Activated T-helper 1 cell treated with anti-CD3 and anti-CD28 coated beads, Interleukin-12 subunit alpha, Interleukin-12 subunit beta, Interleukin-2, Interleukin-4 antibody, amounts not matched to agents 30 ng/mL and 10 ng/mL and 1 ng/mL, durations not matched to agents 14 hours and 24 hours and 36 hours (primary cell): ENCODE measurements at regions of chr7 and their contacts with region 1.

Region 1: DNA sequence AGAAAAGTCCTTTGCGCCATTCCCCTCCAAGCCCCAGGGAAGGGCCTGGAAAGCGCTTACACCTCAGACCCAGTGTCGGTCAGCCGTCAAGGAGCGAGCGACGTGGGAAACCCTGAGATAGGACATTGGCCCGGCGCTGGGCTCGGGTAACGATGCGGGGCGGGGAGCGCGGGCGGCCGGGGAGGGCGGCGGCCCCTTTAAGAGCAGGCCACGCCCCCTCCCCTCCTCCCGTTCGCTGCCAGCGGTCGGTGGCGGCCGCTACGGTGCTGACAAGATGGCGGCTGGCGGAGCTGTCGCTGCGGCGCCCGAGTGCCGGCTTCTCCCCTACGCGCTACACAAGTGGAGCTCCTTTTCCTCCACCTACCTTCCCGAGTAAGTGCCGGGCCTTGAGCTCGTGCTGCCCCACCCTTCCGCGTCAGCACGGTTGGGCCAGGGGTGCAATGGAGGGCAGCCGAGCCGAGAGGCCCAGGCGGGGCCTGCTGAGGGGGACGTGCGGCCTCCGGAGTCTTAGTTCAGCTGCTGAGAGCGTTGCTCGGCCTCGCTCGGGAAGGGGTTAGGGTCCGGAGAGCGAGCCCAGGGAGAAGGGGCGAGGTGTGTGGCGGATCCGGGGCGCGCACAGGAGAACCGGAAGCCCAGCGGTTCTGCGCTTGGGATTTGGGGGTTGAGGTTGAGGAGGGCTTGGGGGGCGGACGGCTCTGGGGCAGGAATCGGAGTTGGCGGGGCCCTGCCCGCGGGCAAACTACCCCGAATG is at the start of gene MKLN1:
- DNase-seq: peak; percentile 87
- H3K4me3 Mint-ChIP-seq: peak within 1 kb of the TSS; percentile 96
- H3K27ac Mint-ChIP-seq: peak within 1 kb of the TSS; percentile 97
- H3K4me1 Mint-ChIP-seq: peaks cover 66% of the 10 kb centered on the region
- H3K27me3 Mint-ChIP-seq: no peaks in the 10 kb centered on the region
- total RNA-seq, gene MKLN1: 31.1 and 34.0 TPM in 2 replicates

Region 2: GRCh38 chr7:130961128-130961601 is 366.6 kb before region 1 on chr7:
- intact Hi-C with region 1: loop called (anchors 5 kb)
- DNase-seq: peak; percentile 83
- H3K4me3 Mint-ChIP-seq: peak overlapping the region; percentile 92
- H3K27ac Mint-ChIP-seq: peak overlapping the region; percentile 98
- H3K4me1 Mint-ChIP-seq: peaks cover 29% of the 10 kb centered on the region
- H3K27me3 Mint-ChIP-seq: no peaks in the 10 kb centered on the region

Region 3: GRCh38 chr7:131107337-131108211 is 220.2 kb before region 1 on chr7:
- intact Hi-C with region 1: loop called (anchors 1 kb)
- DNase-seq: peak; percentile 75
- H3K4me3 Mint-ChIP-seq: peak overlapping the region; percentile 99
- H3K27ac Mint-ChIP-seq: peak overlapping the region; percentile 100
- H3K4me1 Mint-ChIP-seq: peaks cover 65% of the 10 kb centered on the region
- H3K27me3 Mint-ChIP-seq: no peaks in the 10 kb centered on the region

Region 4: GRCh38 chr7:131338173-131338572 is 10.4 kb after region 1 on chr7:
- intact Hi-C with region 1: loop called (anchors 1 kb)
- DNase-seq: no peak
- H3K4me3 Mint-ChIP-seq: no peak overlapping the region
- H3K27ac Mint-ChIP-seq: no peak overlapping the region
- H3K4me1 Mint-ChIP-seq: peaks cover 20% of the 10 kb centered on the region
- H3K27me3 Mint-ChIP-seq: no peaks in the 10 kb centered on the region

Region 5: DNA sequence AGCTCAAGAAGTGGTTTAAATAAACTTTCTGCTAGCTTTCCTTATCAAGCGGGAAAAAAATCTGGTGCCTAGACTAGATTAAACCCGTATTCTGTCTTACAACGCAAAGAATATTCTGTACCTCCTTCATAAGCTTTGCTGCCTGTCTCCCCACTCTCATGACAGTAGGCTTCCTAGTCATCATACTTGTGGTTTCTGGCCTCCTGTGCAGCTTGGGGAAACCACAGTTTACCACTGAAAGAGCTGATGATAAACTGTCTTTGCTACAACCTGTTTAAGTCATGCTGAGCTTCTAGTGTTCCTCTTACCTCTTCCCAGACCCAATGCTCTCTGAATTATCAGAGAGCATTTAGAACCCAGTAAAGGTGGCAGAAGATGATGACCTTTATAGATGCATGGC is 173.6 kb after region 1 on chr7:
- intact Hi-C with region 1: loop called (anchors 5 kb)
- DNase-seq: peak; percentile 61
- H3K4me3 Mint-ChIP-seq: no peak overlapping the region
- H3K27ac Mint-ChIP-seq: peak overlapping the region; percentile 28
- H3K4me1 Mint-ChIP-seq: peaks cover 49% of the 10 kb centered on the region
- H3K27me3 Mint-ChIP-seq: no peaks in the 10 kb centered on the region